HCT116 (cell line): ENCODE measurements at regions of chr13 and their contacts with region 1.

Region 1: DNA sequence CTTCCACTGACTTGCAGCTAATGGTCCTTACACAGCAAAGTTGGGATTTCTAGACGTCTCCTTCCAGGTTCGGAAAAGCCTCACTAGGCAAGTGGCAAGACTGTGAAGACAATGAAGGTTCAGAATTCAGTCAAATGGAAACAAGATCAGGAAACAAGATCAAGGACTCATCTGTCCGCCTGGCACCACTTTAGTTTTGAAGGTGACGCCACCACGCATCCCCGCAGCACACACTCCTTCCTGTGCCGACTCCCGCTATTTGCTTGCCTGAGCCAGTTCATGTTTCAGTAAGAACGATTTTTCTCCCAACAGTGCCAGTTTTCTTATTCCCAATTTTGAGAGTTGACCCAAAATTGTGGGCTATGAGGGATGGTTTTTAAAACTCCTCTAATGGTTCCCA is 41.4 kb downstream of the MPHOSPH8 start:
- DNase-seq: no peak
- ATAC-seq: no peak
- H3K4me3 ChIP-seq: no peak overlapping the region
- H3K27ac ChIP-seq: no peak overlapping the region
- H3K4me1 ChIP-seq: no peaks in the 10 kb centered on the region
- H3K27me3 ChIP-seq: no peaks in the 10 kb centered on the region
- CTCF ChIP-seq: no peak
- POLR2A ChIP-seq: no peak
- RAD21 ChIP-seq: no peak

Region 2: GRCh38 chr13:19834704-19835103 is 159.8 kb after region 1 on chr13:
- CTCF ChIA-PET with region 1: no interaction called
- POLR2A ChIA-PET with region 1: no interaction called
- RAD21 ChIA-PET with region 1: no interaction called
- intact Hi-C with region 1: loop called (anchors 5 kb)
- DNase-seq: no peak
- ATAC-seq: no peak
- H3K4me3 ChIP-seq: no peak overlapping the region
- H3K27ac ChIP-seq: no peak overlapping the region
- H3K4me1 ChIP-seq: no peaks in the 10 kb centered on the region
- H3K27me3 ChIP-seq: no peaks in the 10 kb centered on the region
- CTCF ChIP-seq: no peak
- POLR2A ChIP-seq: no peak
- RAD21 ChIP-seq: no peak

Region 3: DNA sequence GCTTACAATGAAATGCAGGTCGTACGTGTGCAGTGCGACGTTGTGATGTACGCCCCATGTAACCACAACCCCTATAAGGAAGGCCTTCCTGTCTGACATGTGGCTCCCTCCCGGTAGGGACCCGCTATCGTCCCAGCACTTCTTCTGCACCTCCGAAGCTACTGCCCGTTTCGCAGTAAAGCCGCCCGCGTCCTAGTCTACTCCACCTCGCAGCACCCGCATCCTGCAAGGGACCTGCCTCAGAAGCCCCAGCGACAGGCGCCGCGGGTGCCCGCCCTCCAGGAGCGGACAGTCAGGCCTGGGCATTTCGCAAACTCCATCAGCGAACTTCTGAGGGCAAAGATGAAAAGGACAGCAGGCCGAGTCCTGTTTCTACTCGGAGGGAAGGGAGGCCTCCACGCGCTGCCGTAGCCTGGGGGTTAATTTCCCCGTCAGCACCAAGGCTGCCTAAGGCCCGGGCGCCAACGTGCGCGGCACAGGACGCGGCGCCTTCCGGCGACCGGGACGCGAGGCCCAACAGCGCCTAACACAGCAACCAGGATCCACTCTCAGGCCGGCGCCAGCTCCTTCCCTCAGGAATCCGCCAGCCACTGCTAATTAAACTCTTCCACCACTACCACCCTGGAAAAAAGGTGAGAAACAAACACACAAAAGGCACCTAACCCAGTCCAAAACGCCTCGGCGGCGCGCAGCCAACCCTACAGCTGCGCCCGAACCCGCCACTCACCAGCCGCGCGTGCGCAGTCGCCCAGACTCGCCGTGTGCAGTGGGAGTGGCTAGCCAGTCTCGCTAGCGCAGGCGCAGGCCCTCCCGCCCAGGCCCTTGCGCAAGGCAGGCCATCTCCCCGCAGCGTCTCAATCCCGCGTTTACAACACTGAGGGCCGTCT is 1098.6 kb after region 1 on chr13 and contains the start of gene EEF1AKMT1:
- CTCF ChIA-PET with region 1: no interaction called
- POLR2A ChIA-PET with region 1: no interaction called
- RAD21 ChIA-PET with region 1: no interaction called
- intact Hi-C with region 1: no loop called
- DNase-seq: peak; percentile 83
- ATAC-seq: peak; percentile 89
- H3K4me3 ChIP-seq: peak within 1 kb of the TSS; percentile 74 to 80
- H3K27ac ChIP-seq: peak within 1 kb of the TSS; percentile 98
- H3K4me1 ChIP-seq: peaks cover 8 to 15% of the 10 kb centered on the region in 2 experiments; a peak in 3 of 4 replicates
- H3K27me3 ChIP-seq: no peaks in the 10 kb centered on the region
- CTCF ChIP-seq: no peak
- POLR2A ChIP-seq: peak; percentile 78
- RAD21 ChIP-seq: no peak
- total RNA-seq, gene EEF1AKMT1: 9.8 TPM